ENCODE measurements at regions of chr1 and their contacts with region 1.

Region 1: DNA sequence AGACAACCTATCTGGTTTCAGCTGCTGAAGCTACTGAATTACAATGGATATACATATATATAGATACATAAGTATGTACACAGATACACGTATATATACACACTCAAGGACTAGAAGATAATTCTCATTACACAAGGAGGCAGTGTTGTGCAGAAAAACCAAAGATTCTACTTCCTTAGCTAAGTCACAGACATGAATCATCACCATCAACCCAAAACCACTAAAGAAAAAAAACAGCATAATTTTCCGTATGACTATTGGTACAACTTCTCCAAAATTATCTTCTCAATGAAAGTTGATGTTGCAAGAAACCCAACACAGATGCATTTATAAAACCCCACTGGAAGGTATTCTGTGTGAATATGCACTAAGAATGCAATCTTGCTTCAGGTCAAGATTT is 36.8 kb upstream of the RPF1 start:
- DNase-seq: no peak
- H3K4me3 ChIP-seq: no peak overlapping the region
- H3K27ac ChIP-seq: no peak overlapping the region
- H3K4me1 ChIP-seq: no peaks in the 10 kb centered on the region
- H3K27me3 ChIP-seq: no peaks in the 10 kb centered on the region
- CTCF ChIP-seq: peak; percentile 24 to 76 (median 61)
- POLR2A ChIP-seq: no peak

Region 2: GRCh38 chr1:84603941-84604830 is 161.9 kb after region 1 on chr1:
- intact Hi-C with region 1: loop called in 1 of 2 experiments (anchors 5 kb)
- DNase-seq: peak in 5 of 7 donors; percentile 18 to 65 (median 41)
- H3K4me3 ChIP-seq: peak overlapping the region in 1 of 4 donors; percentile 22
- H3K27ac ChIP-seq: peak overlapping the region in 1 of 5 donors; percentile 45
- H3K4me1 ChIP-seq: no peaks in the 10 kb centered on the region
- H3K27me3 ChIP-seq: no peaks in the 10 kb centered on the region
- CTCF ChIP-seq: peak in 5 of 6 experiments; percentile 36 to 55 (median 48)
- POLR2A ChIP-seq: no peak

Region 3: DNA sequence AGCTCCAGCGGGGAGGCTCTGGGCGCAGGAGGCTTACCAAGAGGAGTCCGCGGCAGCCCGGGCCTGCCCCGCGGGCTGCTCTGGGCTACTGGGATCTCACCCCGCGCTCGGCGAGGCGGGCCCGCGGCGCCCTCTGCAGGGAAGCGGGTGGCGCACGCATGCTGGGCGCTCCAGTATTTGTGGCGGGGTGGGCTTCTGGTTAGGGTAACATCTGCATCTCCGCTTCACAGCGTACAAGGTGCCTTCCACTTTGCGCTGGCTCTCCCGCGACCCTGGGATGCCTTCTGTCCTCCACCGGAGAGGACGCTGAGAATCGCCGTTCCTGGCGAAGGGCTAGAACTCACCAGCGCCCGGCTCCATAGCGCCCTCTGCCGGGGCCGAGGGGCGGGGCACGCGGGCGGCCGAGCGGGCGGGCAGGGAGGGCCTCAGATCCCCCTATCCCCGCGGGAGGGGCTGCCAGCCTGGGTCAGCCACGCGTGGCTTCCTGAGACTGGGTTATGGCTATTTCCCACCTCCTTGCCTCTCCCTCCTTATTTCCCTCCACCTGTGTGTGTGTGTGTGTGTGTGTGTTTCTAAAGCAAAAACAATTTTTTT is 178.6 kb after region 1 on chr1:
- intact Hi-C with region 1: loop called in 1 of 2 experiments (anchors 5 kb)
- DNase-seq: peak; percentile 68 to 85 (median 77)
- H3K4me3 ChIP-seq: peak overlapping the region; percentile 7 to 55 (median 32)
- H3K27ac ChIP-seq: peak overlapping the region in 3 of 5 donors; percentile 52 to 74 (median 69)
- H3K4me1 ChIP-seq: peaks cover 8 to 17% of the 10 kb centered on the region in 2 donors
- H3K27me3 ChIP-seq: no peaks in the 10 kb centered on the region
- CTCF ChIP-seq: peak; percentile 75 to 98 (median 90)
- POLR2A ChIP-seq: no peak